IMR-90 (cell line): ENCODE measurements at regions of chr4 and their contacts with region 1.

Region 1: DNA sequence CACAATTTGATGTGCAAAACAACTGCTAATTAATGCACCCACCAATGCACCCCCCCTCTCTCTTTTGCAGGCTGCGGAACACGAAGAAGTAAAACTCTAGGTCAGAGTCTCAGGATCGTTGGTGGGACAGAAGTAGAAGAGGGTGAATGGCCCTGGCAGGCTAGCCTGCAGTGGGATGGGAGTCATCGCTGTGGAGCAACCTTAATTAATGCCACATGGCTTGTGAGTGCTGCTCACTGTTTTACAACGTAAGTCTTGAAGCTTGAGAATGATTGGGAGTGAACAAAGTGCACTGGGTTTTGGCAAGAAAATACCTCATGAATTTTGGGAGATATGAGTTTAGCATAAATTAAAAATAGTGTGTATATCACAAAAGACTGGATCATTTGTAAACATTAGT is 28.9 kb downstream of the TMPRSS11E start:
- DNase-seq: no peak
- ATAC-seq: no peak
- H3K4me3 ChIP-seq: no peak overlapping the region
- H3K27ac ChIP-seq: no peak overlapping the region
- H3K4me1 ChIP-seq: no peaks in the 10 kb centered on the region
- H3K27me3 ChIP-seq: no peaks in the 10 kb centered on the region
- CTCF ChIP-seq: no peak
- POLR2A ChIP-seq: no peak
- RAD21 ChIP-seq: no peak

Region 2: DNA sequence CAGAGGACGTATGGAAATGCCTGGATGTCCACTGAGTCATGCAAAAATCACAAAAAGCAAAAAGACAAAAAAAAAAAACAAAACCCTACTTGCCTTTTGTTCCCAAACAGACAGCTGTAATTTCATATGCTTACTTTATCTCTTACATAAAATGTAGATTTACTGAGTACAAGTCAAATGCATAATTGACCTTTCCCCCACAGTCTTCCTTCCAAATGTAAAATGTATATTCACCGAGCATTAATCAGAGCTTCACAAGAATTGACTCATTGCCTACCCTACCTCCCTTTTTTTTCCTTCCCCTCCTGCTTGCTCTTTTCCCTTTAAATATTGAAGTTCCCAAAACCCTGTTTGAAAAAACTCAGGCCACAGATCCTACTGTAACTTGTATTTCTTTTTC is 198.2 kb before region 1 on chr4:
- CTCF ChIA-PET with region 1: no interaction called
- POLR2A ChIA-PET with region 1: no interaction called
- dilution Hi-C with region 1: no loop called
- in situ Hi-C with region 1: no loop called
- intact Hi-C with region 1: loop called (anchors 5 kb)
- DNase-seq: no peak
- ATAC-seq: no peak
- H3K4me3 ChIP-seq: no peak overlapping the region
- H3K27ac ChIP-seq: no peak overlapping the region
- H3K4me1 ChIP-seq: no peaks in the 10 kb centered on the region
- H3K27me3 ChIP-seq: no peaks in the 10 kb centered on the region
- CTCF ChIP-seq: no peak
- POLR2A ChIP-seq: no peak
- RAD21 ChIP-seq: no peak